B cell (primary cell): ENCODE measurements at regions of chr1 and their contacts with region 1.

Region 1: GRCh38 chr1:27662707-27663393 is 9.1 kb downstream of the IFI6 start:
- DNase-seq: peak; percentile 93
- ATAC-seq: peak; percentile 40
- H3K4me3 ChIP-seq: peak overlapping the region in 4 of 5 experiments; percentile 20 to 33 (median 24)
- H3K4me3 Mint-ChIP-seq: peak overlapping the region; percentile 81
- H3K27ac ChIP-seq: peak overlapping the region; percentile 85 to 96
- H3K27ac Mint-ChIP-seq: peak overlapping the region; percentile 99
- H3K4me1 ChIP-seq: peaks cover 42 to 52% of the 10 kb centered on the region in 2 donors
- H3K4me1 Mint-ChIP-seq: peaks cover 50% of the 10 kb centered on the region
- H3K27me3 ChIP-seq: no peaks in the 10 kb centered on the region
- H3K27me3 Mint-ChIP-seq: no peaks in the 10 kb centered on the region
- CTCF ChIP-seq: peak; percentile 89

Region 2: DNA sequence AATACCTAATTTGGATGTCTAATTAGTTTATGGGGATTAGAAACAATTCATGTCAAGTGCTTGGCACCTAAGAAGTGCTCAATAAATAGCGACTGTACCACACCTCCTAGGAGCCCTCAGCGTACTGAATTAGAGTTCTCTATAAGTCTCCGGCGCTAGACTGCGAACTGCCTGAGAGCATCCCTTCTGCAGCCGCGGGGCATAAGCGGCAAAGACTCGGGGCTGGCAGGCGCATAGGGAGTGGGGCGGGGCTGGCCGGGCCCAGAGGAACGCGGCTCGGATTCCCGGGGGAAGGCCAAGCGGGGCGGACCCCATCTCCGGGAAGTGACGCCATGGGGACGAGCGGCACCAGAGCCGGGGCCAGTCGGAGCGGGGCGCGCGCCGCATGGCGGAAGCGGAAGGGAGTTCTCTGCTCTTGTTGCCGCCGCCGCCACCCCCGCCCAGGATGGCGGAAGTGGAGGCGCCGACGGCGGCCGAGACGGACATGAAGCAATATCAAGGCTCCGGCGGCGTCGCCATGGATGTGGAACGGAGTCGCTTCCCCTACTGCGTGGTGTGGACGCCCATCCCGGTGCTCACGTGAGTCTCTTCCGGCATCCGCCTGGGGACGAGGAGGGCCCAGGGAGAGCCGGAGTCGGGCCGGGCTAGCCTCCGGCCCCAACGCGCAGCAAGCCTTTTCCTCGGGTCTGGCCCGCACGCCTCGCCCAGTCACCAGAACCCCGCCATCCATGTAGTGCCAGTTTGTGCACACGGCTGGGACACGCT is 340.9 kb before region 1 on chr1 and contains the start of gene TMEM222:
- CTCF ChIA-PET with region 1: interaction called, 3 read pairs
- POLR2A ChIA-PET with region 1: interaction called, 10 read pairs
- intact Hi-C with region 1: no loop called
- DNase-seq: peak; percentile 98
- ATAC-seq: peak; percentile 96
- H3K4me3 ChIP-seq: peak within 1 kb of the TSS; percentile 80 to 100 (median 98)
- H3K4me3 Mint-ChIP-seq: peak within 1 kb of the TSS; percentile 98
- H3K27ac ChIP-seq: peak within 1 kb of the TSS; percentile 94
- H3K27ac Mint-ChIP-seq: peak within 1 kb of the TSS; percentile 97
- H3K4me1 ChIP-seq: peaks cover 17 to 25% of the 10 kb centered on the region in 2 donors
- H3K4me1 Mint-ChIP-seq: peaks cover 51% of the 10 kb centered on the region
- H3K27me3 ChIP-seq: no peaks in the 10 kb centered on the region
- H3K27me3 Mint-ChIP-seq: peaks cover 12% of the 10 kb centered on the region
- CTCF ChIP-seq: no peak
- total RNA-seq, gene TMEM222: 44.2 and 48.7 TPM in 2 replicates

Region 3: DNA sequence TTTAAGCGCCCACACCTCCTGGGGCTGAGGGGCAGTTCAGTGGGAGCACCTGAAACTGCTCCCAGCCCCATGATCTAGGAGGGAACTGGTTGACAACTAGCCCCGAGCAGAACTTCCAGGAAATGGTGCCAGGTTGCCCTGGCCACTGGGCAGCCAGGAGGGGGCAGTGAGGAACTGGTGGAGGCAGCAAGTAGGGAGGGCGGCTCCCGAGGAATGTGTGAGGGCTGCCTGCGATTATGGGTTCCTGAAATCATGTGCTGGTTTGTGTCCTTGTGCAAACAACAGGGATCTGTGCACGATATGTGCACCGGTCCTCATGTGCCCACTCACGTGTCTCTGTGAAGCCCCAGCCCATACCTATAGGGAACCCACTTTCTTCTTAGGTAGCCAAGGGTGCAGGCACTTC is 260.5 kb before region 1 on chr1:
- CTCF ChIA-PET with region 1: interaction called, 25 read pairs
- POLR2A ChIA-PET with region 1: interaction called, 6 read pairs
- intact Hi-C with region 1: loop called (anchors 1 kb)
- DNase-seq: peak; percentile 54
- ATAC-seq: no peak
- H3K4me3 ChIP-seq: no peak overlapping the region
- H3K4me3 Mint-ChIP-seq: peak overlapping the region; percentile 72
- H3K27ac ChIP-seq: peak overlapping the region; percentile 49 to 79
- H3K27ac Mint-ChIP-seq: peak overlapping the region; percentile 89
- H3K4me1 ChIP-seq: peaks cover 41 to 59% of the 10 kb centered on the region in 2 donors
- H3K4me1 Mint-ChIP-seq: peaks cover 58% of the 10 kb centered on the region
- H3K27me3 ChIP-seq: no peaks in the 10 kb centered on the region
- H3K27me3 Mint-ChIP-seq: no peaks in the 10 kb centered on the region
- CTCF ChIP-seq: no peak

Region 4: DNA sequence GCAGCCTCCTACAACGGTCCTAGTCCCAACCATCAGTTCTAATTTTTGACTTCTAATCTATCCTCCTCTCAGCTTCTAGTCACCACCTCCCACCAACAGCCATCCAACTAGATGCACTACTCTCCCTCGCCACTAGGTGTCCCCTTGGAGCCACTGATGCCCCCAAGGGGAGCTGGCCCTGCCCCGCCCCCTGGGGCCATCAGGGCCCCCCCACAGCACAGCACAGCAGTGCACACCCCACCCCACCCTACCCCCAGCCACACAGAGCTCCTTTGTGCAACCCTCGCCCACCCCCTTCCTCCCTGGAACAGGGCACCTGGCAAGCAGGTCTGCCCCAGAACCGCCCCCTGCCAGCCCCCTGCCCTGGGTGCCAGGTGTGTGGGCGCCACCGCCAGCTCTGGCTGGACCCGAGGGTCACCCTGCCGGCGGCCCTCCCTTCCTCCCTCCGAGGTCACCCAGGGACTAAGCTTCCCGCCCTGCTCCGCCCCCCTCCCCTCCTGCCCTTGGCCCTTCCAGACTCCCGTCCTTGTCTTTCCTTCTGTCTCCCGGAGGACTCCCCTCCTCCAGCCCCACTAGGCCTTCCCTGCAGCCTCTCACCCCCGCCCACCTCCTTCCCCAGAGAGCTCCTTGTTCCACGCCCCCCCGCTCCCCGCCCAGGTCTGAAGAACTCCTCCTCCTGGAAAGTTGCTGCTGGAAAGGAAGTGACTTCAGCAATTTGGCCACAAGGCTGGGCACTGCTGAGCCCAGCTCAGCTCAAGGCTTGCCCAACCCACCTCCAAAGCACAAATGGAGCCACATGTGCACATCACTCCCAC is 105.9 kb before region 1 on chr1:
- CTCF ChIA-PET with region 1: interaction called, 48 read pairs
- POLR2A ChIA-PET with region 1: interaction called, 5 read pairs
- intact Hi-C with region 1: loop called (anchors 1 kb)
- DNase-seq: peak; percentile 81
- ATAC-seq: peak; percentile 89
- H3K4me3 ChIP-seq: no peak overlapping the region
- H3K4me3 Mint-ChIP-seq: peak overlapping the region; percentile 39
- H3K27ac ChIP-seq: peak overlapping the region in 1 of 2 donors; percentile 22
- H3K27ac Mint-ChIP-seq: peak overlapping the region; percentile 83
- H3K4me1 ChIP-seq: peaks cover 23 to 33% of the 10 kb centered on the region in 2 donors
- H3K4me1 Mint-ChIP-seq: peaks cover 44% of the 10 kb centered on the region
- H3K27me3 ChIP-seq: no peaks in the 10 kb centered on the region
- H3K27me3 Mint-ChIP-seq: no peaks in the 10 kb centered on the region
- CTCF ChIP-seq: peak; percentile 90

Region 5: GRCh38 chr1:27624467-27625178 is 38.2 kb before region 1 on chr1:
- CTCF ChIA-PET with region 1: interaction called, 473 read pairs
- POLR2A ChIA-PET with region 1: interaction called, 55 read pairs
- intact Hi-C with region 1: no loop called
- DNase-seq: no peak
- ATAC-seq: no peak
- H3K4me3 ChIP-seq: peak overlapping the region; percentile 56 to 66 (median 63)
- H3K4me3 Mint-ChIP-seq: no peak overlapping the region
- H3K27ac ChIP-seq: peak overlapping the region; percentile 87 to 88
- H3K27ac Mint-ChIP-seq: no peak overlapping the region
- H3K4me1 ChIP-seq: peaks cover 74 to 91% of the 10 kb centered on the region in 2 donors
- H3K4me1 Mint-ChIP-seq: peaks cover 41% of the 10 kb centered on the region
- H3K27me3 ChIP-seq: no peaks in the 10 kb centered on the region
- H3K27me3 Mint-ChIP-seq: no peaks in the 10 kb centered on the region
- CTCF ChIP-seq: no peak

Region 6: GRCh38 chr1:27650539-27651175 is 12.2 kb before region 1 on chr1:
- CTCF ChIA-PET with region 1: interaction called, 17 read pairs
- POLR2A ChIA-PET with region 1: interaction called, 5 read pairs
- intact Hi-C with region 1: no loop called
- DNase-seq: no peak
- ATAC-seq: no peak
- H3K4me3 ChIP-seq: no peak overlapping the region
- H3K4me3 Mint-ChIP-seq: no peak overlapping the region
- H3K27ac ChIP-seq: no peak overlapping the region
- H3K27ac Mint-ChIP-seq: peak overlapping the region; percentile 53
- H3K4me1 ChIP-seq: peaks cover 0 to 6% of the 10 kb centered on the region in 2 donors
- H3K4me1 Mint-ChIP-seq: peaks cover 10% of the 10 kb centered on the region
- H3K27me3 ChIP-seq: no peaks in the 10 kb centered on the region
- H3K27me3 Mint-ChIP-seq: no peaks in the 10 kb centered on the region
- CTCF ChIP-seq: no peak

Region 7: GRCh38 chr1:27682351-27682944 is 19.6 kb after region 1 on chr1:
- CTCF ChIA-PET with region 1: no interaction called
- POLR2A ChIA-PET with region 1: no interaction called
- intact Hi-C with region 1: no loop called
- DNase-seq: no peak
- ATAC-seq: no peak
- H3K4me3 ChIP-seq: no peak overlapping the region
- H3K4me3 Mint-ChIP-seq: no peak overlapping the region
- H3K27ac ChIP-seq: no peak overlapping the region
- H3K27ac Mint-ChIP-seq: no peak overlapping the region
- H3K4me1 ChIP-seq: no peaks in the 10 kb centered on the region
- H3K4me1 Mint-ChIP-seq: no peaks in the 10 kb centered on the region
- H3K27me3 ChIP-seq: no peaks in the 10 kb centered on the region
- H3K27me3 Mint-ChIP-seq: peaks cover 6% of the 10 kb centered on the region
- CTCF ChIP-seq: no peak